Mammary epithelial cell (primary cell): ENCODE measurements at regions of chr7 and their contacts with region 1.

Region 1: DNA sequence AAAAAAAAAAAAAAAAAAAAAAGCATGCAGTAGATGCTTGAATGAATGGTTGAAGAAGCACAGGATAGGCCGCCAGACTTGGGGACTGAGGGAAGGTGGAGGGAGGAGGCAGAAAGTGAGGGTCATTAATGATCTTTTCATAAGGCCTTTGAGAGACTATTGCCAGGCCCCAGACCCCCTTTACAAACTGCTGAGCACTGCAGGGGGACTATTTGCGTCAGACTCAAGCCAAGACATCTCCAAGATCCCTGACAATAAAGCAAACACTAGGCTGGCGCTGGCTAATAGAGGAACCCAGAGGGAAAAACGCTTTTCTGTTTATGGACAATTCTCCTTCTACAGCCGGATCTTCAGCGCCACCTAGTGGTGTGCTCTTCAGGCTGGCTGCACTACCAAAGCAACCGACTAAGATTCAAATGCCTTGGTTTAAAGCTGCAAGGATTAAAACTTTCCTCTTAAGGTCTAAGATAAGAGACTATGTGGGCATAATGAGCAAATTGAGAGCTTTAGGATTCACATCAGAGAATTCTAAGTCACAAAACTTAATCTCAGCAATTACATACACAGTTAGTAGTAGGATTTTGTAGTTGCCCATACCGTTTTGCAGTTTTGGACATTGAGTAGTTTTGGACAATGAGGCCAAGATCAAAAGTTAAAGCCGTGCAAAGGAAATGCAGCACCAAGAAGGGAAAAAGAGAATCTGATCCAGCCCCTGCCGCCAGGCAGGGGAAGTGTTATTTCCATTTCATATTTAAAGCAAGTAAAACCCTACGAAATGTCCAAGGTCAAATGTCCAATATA is 17.9 kb upstream of the AGK start:
- DNase-seq: peak; percentile 38
- H3K4me3 ChIP-seq: no peak overlapping the region
- H3K27ac ChIP-seq: no peak overlapping the region
- H3K4me1 ChIP-seq: no peaks in the 10 kb centered on the region
- H3K27me3 ChIP-seq: no peaks in the 10 kb centered on the region
- CTCF ChIP-seq: peak; percentile 94 to 99

Region 2: GRCh38 chr7:140810830-140811556 is 722.4 kb before region 1 on chr7:
- CTCF ChIA-PET with region 1: no interaction called
- dilution Hi-C with region 1: no loop called
- in situ Hi-C with region 1: loop called (anchors 25 kb)
- intact Hi-C with region 1: loop called (anchors 1 kb)
- DNase-seq: peak; percentile 55
- H3K4me3 ChIP-seq: no peak overlapping the region
- H3K27ac ChIP-seq: no peak overlapping the region
- H3K4me1 ChIP-seq: no peaks in the 10 kb centered on the region
- H3K27me3 ChIP-seq: no peaks in the 10 kb centered on the region
- CTCF ChIP-seq: peak; percentile 54 to 65

Region 3: DNA sequence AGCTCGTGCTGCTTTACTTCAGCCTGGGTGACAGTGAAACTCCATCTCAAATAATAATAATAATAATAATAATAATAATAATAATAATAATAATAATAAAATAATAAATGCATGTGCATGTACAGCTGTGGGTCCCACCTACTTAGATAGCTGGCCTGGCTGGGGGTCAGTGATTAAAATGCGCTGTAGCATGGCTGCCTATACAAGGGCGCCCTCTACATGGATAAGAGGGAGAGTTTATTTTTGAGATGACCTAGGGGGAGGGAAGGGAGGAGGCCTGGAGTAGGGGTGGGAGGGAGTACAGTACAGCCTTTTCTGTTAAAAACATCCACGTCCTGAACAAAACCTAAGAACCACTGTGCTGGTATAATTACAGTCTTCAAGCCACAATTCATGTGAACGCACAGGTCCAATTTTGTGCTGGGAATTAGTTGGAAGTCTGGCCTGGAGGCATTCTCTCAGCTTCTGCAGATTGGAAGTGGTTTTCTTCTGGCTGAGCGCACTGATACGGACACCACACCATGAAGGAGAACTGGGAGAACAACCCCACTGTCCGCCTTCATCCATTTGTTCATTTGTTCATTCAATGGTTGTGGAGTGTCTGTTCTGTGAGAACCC is 313.0 kb before region 1 on chr7:
- CTCF ChIA-PET with region 1: no interaction called
- dilution Hi-C with region 1: no loop called
- in situ Hi-C with region 1: no loop called
- intact Hi-C with region 1: loop called (anchors 2 kb)
- DNase-seq: no peak
- H3K4me3 ChIP-seq: no peak overlapping the region
- H3K27ac ChIP-seq: no peak overlapping the region
- H3K4me1 ChIP-seq: no peaks in the 10 kb centered on the region
- H3K27me3 ChIP-seq: no peaks in the 10 kb centered on the region
- CTCF ChIP-seq: peak; percentile 29 to 57

Region 4: DNA sequence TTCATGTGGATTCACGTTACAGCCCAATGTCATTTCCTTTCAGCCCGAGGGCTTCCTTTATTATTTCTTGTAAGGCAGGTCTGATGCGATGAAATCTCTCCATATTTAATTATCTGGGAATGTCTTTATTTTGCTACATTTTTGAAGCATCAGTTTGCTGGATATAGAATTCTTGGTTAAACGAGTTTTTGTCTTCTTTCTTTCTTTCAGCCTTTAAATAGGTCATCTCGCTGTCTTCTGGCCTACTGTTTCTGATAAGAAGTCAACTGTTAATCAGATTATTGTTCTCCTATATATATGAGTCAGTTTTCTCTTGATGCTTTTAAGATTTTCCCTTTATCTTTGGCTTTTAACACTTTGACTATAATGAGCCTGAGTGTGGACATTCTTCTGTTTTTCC is 274.8 kb before region 1 on chr7:
- CTCF ChIA-PET with region 1: no interaction called
- dilution Hi-C with region 1: no loop called
- in situ Hi-C with region 1: no loop called
- intact Hi-C with region 1: no loop called
- DNase-seq: no peak
- H3K4me3 ChIP-seq: no peak overlapping the region
- H3K27ac ChIP-seq: no peak overlapping the region
- H3K4me1 ChIP-seq: no peaks in the 10 kb centered on the region
- H3K27me3 ChIP-seq: no peaks in the 10 kb centered on the region
- CTCF ChIP-seq: no peak

Region 5: GRCh38 chr7:141328290-141328689 is 205.1 kb before region 1 on chr7:
- CTCF ChIA-PET with region 1: no interaction called
- dilution Hi-C with region 1: no loop called
- in situ Hi-C with region 1: no loop called
- intact Hi-C with region 1: loop called (anchors 5 kb)
- DNase-seq: no peak
- H3K4me3 ChIP-seq: no peak overlapping the region
- H3K27ac ChIP-seq: no peak overlapping the region
- H3K4me1 ChIP-seq: no peaks in the 10 kb centered on the region
- H3K27me3 ChIP-seq: no peaks in the 10 kb centered on the region
- CTCF ChIP-seq: peak in 1 of 2 donors; percentile 28

Region 6: DNA sequence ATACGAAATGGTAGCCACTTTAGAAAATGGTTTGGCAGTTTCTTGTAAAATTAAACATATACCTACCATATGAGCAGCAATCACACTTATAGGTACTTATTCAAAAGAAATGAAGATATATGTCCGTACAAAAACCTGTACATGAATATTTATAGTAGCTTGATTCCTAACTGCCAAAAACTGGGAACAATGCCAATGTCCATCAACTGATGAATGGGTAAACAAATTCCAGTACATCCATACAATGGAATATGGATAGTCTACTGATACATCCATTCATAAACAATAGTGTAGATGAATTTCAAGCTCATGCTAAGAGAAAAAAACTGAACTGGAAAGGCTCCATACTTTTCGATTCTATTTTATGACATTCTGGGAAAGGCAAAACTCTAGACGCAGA is 86.4 kb after region 1 on chr7:
- CTCF ChIA-PET with region 1: no interaction called
- dilution Hi-C with region 1: no loop called
- in situ Hi-C with region 1: no loop called
- intact Hi-C with region 1: no loop called
- DNase-seq: no peak
- H3K4me3 ChIP-seq: no peak overlapping the region
- H3K27ac ChIP-seq: no peak overlapping the region
- H3K4me1 ChIP-seq: peaks cover 5% of the 10 kb centered on the region
- H3K27me3 ChIP-seq: no peaks in the 10 kb centered on the region
- CTCF ChIP-seq: no peak